ENCODE measurements at regions of chr19 and their contacts with region 1.

Region 1: GRCh38 chr19:39494661-39495060 is 4.1 kb upstream of the DLL3 start:
- DNase-seq: no peak
- ATAC-seq: no peak
- H3K4me3 ChIP-seq: no peak overlapping the region
- H3K27ac ChIP-seq: no peak overlapping the region
- H3K4me1 ChIP-seq: peaks cover 21% of the 10 kb centered on the region
- CTCF ChIP-seq: no peak
- EP300 ChIP-seq: no peak
- POLR2A ChIP-seq: no peak
- RAD21 ChIP-seq: no peak

Region 2: DNA sequence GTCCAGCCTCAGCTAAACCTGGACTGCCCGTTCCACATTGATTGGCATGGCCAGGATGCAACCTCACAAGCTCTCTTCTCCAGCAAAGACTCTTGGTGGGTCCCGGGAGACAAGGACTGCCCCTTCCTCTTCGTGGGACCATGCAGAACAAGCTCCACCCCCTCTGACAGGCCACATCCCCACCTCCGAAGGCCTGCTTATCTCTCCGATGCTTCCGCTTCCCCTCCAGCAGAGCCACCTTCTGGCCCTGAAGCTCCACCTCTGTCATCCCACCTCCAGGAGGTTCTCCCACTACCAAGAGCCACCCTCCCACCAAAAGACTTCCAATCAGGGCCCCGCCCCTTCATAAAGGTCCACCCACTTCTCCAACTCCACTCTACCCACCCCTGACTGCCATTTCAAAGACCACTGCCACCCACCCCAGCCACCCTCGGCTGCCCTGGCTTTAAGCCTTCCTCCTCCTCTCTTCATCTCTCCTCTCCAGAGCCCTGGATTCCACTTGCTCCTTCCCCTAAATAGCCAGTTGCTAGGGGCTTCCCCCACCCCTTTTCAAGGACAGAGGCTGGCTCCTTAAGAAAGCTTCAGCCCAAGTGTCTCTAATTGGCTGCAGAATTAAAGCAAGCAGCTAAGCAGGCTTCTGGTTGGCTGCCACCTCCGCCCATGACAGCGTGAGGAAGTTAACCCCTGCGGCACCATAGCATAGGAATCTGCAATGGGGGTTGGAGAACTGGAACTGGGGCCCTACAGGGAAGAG is 183.9 kb before region 1 on chr19:
- CTCF ChIA-PET with region 1: no interaction called
- POLR2A ChIA-PET with region 1: no interaction called
- DNase-seq: peak in 1 of 2 experiments; percentile 55
- ATAC-seq: peak in 1 of 2 experiments; percentile 23; a peak in 2 of 6 replicates
- H3K4me3 ChIP-seq: no peak overlapping the region
- H3K27ac ChIP-seq: no peak overlapping the region
- H3K4me1 ChIP-seq: peaks cover 4% of the 10 kb centered on the region; the same call in 1 of the 3 replicates
- CTCF ChIP-seq: no peak
- EP300 ChIP-seq: no peak
- POLR2A ChIP-seq: no peak
- RAD21 ChIP-seq: no peak

Region 3: GRCh38 chr19:39480337-39481228 is 14.1 kb before region 1 on chr19 and contains the start of gene TIMM50:
- CTCF ChIA-PET with region 1: interaction called, 305 read pairs
- POLR2A ChIA-PET with region 1: interaction called, 12 read pairs
- DNase-seq: peak; percentile 97
- ATAC-seq: peak; percentile 91 to 96
- H3K4me3 ChIP-seq: peak within 1 kb of the TSS; percentile 70
- H3K27ac ChIP-seq: peak within 1 kb of the TSS; percentile 86 to 92
- H3K4me1 ChIP-seq: peaks cover 15% of the 10 kb centered on the region
- CTCF ChIP-seq: no peak
- EP300 ChIP-seq: no peak
- POLR2A ChIP-seq: peak; percentile 93
- RAD21 ChIP-seq: no peak
- polyA plus RNA-seq, gene TIMM50: 234 and 246 TPM in 2 replicates

Region 4: DNA sequence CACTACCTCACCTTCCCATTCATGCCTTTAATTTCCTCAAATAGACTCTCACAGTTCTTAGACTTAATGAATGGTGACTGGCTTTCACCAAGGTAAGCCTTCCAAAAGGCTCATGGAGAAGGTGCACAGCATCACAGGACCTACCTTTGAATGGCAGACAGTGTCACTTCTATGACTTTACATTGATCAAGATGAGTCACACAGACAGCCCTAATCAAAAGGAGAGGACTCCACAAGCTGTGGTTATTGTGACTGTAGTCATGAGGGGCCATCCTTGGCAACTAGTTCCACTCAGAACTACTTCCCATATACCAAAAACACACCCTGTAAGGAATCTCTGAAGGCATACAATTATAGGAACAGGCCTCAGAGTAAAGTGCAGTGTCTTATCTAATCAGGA is 166.9 kb after region 1 on chr19:
- CTCF ChIA-PET with region 1: no interaction called
- POLR2A ChIA-PET with region 1: no interaction called
- DNase-seq: no peak
- ATAC-seq: no peak
- H3K4me3 ChIP-seq: no peak overlapping the region
- H3K27ac ChIP-seq: no peak overlapping the region
- H3K4me1 ChIP-seq: no peaks in the 10 kb centered on the region
- CTCF ChIP-seq: no peak
- EP300 ChIP-seq: no peak
- POLR2A ChIP-seq: no peak
- RAD21 ChIP-seq: no peak